GM12878 (cell line): ENCODE measurements at regions of chr1 and their contacts with region 1.

Region 1: DNA sequence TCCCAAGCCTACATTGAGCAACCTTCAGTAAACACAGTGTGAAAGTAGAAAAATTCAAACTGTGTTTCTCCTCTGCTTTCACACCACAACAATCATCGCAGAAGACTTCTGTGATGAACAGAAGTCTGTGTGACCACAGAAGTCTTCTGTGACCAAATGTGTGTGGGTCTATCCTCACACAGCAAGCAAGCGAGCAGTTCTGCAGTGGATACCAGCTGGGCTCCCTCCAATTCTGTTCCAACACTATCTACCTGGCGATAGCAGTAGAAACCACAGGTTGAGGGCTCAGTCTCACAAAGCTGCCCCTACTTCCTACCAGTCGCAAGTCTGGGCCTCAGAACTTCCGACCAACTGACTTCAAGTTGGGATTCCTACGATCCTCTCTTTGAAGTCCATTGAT is 21.0 kb upstream of the RAP1A start:
- DNase-seq: no peak
- ATAC-seq: peak; percentile 1; the same call in 2 of the 3 replicates
- H3K4me3 ChIP-seq: no peak overlapping the region
- H3K27ac ChIP-seq: peak overlapping the region; percentile 98
- H3K4me1 ChIP-seq: peaks cover 95% of the 10 kb centered on the region
- H3K27me3 ChIP-seq: no peaks in the 10 kb centered on the region
- CTCF ChIP-seq: no peak
- EP300 ChIP-seq: no peak
- POLR2A ChIP-seq: peak; percentile 46
- RAD21 ChIP-seq: no peak

Region 2: GRCh38 chr1:111656086-111657017 is 57.8 kb after region 1 on chr1:
- CTCF ChIA-PET with region 1: no interaction called
- POLR2A ChIA-PET with region 1: interaction called, 3 read pairs
- RAD21 ChIA-PET with region 1: interaction called, 4 read pairs
- SMC1A ChIA-PET with region 1: interaction called, 3 read pairs
- in situ Hi-C with region 1: no loop called
- intact Hi-C with region 1: loop called (anchors 1 kb)
- DNase-seq: no peak
- ATAC-seq: no peak
- H3K4me3 ChIP-seq: no peak overlapping the region
- H3K27ac ChIP-seq: no peak overlapping the region
- H3K4me1 ChIP-seq: peaks cover 21% of the 10 kb centered on the region
- H3K27me3 ChIP-seq: no peaks in the 10 kb centered on the region
- CTCF ChIP-seq: peak; percentile 28 to 54 (median 52); a peak in 5 of 6 replicates
- EP300 ChIP-seq: no peak
- POLR2A ChIP-seq: no peak
- RAD21 ChIP-seq: peak; percentile 83

Region 3: GRCh38 chr1:112058815-112059450 is 460.4 kb after region 1 on chr1:
- CTCF ChIA-PET with region 1: no interaction called
- POLR2A ChIA-PET with region 1: no interaction called
- RAD21 ChIA-PET with region 1: no interaction called
- SMC1A ChIA-PET with region 1: no interaction called
- in situ Hi-C with region 1: no loop called
- intact Hi-C with region 1: no loop called
- DNase-seq: no peak
- ATAC-seq: no peak
- H3K4me3 ChIP-seq: no peak overlapping the region
- H3K27ac ChIP-seq: no peak overlapping the region
- H3K4me1 ChIP-seq: no peaks in the 10 kb centered on the region
- H3K27me3 ChIP-seq: peaks cover 0 to 4% of the 10 kb centered on the region in 2 experiments; a peak in 2 of 4 replicates
- CTCF ChIP-seq: no peak
- EP300 ChIP-seq: no peak
- POLR2A ChIP-seq: no peak
- RAD21 ChIP-seq: no peak

Region 4: DNA sequence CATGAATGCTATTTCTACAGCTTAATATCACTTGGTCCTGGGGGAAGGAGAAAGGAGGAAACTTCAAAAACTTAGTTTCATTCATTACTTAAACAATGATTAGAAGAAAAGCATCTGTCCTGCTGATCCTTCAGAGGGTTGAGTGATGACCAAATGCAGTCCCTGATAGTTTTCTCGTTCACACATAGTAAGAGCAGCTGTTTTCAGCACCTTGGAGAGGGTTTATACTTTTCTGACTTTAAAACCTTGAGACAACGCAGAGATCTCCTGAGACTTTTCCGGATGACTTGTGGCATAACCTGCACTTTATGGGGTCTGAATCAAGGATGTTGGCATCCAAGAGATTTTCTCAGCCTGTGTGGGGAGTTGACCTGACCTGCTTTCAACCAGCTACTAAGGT is 484.9 kb after region 1 on chr1:
- CTCF ChIA-PET with region 1: no interaction called
- POLR2A ChIA-PET with region 1: no interaction called
- RAD21 ChIA-PET with region 1: no interaction called
- SMC1A ChIA-PET with region 1: no interaction called
- in situ Hi-C with region 1: no loop called
- intact Hi-C with region 1: no loop called
- DNase-seq: no peak
- ATAC-seq: no peak
- H3K4me3 ChIP-seq: no peak overlapping the region
- H3K27ac ChIP-seq: no peak overlapping the region
- H3K4me1 ChIP-seq: no peaks in the 10 kb centered on the region
- H3K27me3 ChIP-seq: no peaks in the 10 kb centered on the region
- CTCF ChIP-seq: no peak
- EP300 ChIP-seq: no peak
- POLR2A ChIP-seq: no peak
- RAD21 ChIP-seq: no peak